CD4-positive, alpha-beta T cell (primary cell): ENCODE measurements at regions of chr3 and their contacts with region 1.

Region 1: DNA sequence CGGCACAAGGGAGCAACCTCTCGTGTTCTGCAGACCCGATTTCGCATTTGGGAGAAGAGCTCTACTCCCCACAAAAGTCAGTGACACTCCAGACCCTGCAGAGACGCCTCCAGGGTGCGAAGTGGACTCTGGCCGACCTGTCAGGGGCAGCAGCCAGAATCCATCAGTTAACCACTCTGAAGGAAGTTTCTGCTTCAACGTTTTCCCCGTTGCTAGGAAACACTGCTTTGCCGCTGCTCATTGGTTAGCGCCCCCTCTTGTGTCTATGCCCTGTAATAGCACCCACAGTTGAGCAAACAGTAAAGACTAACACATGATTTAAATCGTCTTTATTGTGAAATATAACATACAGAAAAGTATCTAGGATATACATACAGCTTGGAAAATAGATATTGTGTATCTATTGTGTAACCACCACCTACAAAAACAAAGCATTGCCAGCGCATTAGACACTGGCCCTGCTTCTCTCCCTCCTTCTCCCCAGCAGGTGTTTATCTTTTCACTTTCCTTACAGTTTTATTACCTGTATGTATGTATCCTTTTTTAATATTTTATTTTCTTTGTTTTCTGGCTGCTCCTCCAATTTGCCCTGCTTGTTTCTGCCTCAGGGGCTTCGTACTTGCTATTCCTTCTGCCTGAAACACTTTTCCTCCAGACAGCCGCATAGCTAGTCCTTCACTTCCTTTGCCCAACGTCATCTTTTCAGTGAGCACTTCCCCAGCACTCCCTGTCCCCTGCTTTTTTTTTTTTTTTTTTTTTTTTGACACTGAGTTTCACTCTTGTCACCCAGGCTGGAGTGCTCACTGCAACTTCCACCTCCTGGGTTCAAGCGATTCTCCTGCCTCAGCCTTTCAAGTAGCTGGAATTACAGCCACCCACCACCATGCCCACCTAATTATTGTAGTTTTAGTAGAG is 38.8 kb downstream of the TMEM40 start:
- DNase-seq: peak; percentile 52 to 90 (median 64)
- ATAC-seq: peak; percentile 97
- H3K4me3 ChIP-seq: peak overlapping the region; percentile 3
- H3K4me3 Mint-ChIP-seq: peak overlapping the region; percentile 48
- H3K27ac ChIP-seq: no peak overlapping the region
- H3K27ac Mint-ChIP-seq: no peak overlapping the region
- H3K4me1 ChIP-seq: peaks cover 5% of the 10 kb centered on the region
- H3K4me1 Mint-ChIP-seq: peaks cover 11% of the 10 kb centered on the region
- H3K27me3 ChIP-seq: no peaks in the 10 kb centered on the region
- H3K27me3 Mint-ChIP-seq: peaks cover 5% of the 10 kb centered on the region
- CTCF ChIP-seq: peak; percentile 96

Region 2: GRCh38 chr3:12135029-12135657 is 585.1 kb before region 1 on chr3:
- CTCF ChIA-PET with region 1: no interaction called
- POLR2A ChIA-PET with region 1: no interaction called
- intact Hi-C with region 1: loop called in 1 of 2 experiments (anchors 5 kb)
- DNase-seq: peak; percentile 25 to 75 (median 45)
- ATAC-seq: peak; percentile 86
- H3K4me3 ChIP-seq: no peak overlapping the region
- H3K4me3 Mint-ChIP-seq: no peak overlapping the region
- H3K27ac ChIP-seq: no peak overlapping the region
- H3K27ac Mint-ChIP-seq: no peak overlapping the region
- H3K4me1 ChIP-seq: no peaks in the 10 kb centered on the region
- H3K4me1 Mint-ChIP-seq: no peaks in the 10 kb centered on the region
- H3K27me3 ChIP-seq: peaks cover 0 to 5% of the 10 kb centered on the region in 2 experiments
- H3K27me3 Mint-ChIP-seq: peaks cover 20% of the 10 kb centered on the region
- CTCF ChIP-seq: peak; percentile 77

Region 3: DNA sequence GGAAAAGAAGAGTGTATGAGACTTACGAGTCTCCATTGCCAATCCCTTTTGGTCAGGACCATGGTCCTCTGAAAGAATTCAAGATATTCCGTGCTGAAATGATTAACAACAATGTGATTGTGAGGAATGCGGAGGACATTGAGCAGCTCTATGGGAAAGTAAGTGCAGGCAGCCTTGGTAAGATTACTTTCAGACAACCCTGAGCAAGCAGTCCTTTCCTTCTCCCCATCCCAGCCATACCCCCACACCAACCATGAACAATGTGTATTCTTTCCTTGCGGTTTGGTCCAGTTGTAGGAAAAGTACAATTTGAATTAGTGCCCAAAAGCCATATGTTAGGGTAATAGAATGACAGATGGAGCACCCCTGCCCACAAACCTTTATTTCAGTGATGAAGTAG is 230.4 kb before region 1 on chr3:
- CTCF ChIA-PET with region 1: no interaction called
- POLR2A ChIA-PET with region 1: no interaction called
- intact Hi-C with region 1: loop called in 1 of 2 experiments (anchors 5 kb)
- DNase-seq: no peak
- ATAC-seq: no peak
- H3K4me3 ChIP-seq: no peak overlapping the region
- H3K4me3 Mint-ChIP-seq: no peak overlapping the region
- H3K27ac ChIP-seq: no peak overlapping the region
- H3K27ac Mint-ChIP-seq: no peak overlapping the region
- H3K4me1 ChIP-seq: peaks cover 8% of the 10 kb centered on the region
- H3K4me1 Mint-ChIP-seq: peaks cover 29% of the 10 kb centered on the region
- H3K27me3 ChIP-seq: no peaks in the 10 kb centered on the region
- H3K27me3 Mint-ChIP-seq: no peaks in the 10 kb centered on the region
- CTCF ChIP-seq: no peak

Region 4: DNA sequence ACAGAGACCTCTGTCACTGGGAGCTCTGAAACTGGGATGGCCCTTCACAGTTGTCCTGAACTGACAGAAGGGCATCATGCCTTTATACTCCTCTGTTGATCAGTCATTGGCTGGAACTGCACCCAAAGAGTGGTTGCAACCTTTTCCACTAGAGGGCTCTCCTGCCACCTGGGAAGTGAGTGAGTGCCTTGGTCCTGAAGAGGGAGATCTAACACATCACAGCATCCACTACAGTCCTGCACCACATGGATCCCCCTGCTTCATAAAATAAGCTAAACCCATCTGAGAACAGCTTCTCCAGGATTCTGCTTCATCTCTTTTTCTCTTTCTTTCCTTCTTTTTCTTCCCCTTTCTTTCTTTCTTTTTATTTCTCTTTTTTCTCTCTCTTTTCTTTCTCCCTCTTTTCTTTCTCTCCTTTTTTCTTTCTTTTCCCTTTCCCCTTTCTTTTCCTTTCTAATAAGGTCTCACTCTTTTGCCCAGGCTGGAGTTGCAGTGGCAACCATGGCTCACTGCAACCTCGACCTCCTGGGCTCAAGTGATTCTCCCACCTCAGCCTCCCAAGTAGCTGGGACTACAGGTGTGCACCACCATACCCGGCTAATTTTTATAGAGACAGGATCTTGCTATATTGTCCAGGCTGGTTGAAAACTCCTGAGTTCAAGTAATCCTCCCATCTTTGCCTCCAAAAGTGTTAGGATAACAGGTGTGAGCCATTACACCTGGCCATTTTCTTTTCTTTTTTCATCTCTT is 13.6 kb before region 1 on chr3:
- CTCF ChIA-PET with region 1: interaction called, 4 read pairs
- POLR2A ChIA-PET with region 1: no interaction called
- intact Hi-C with region 1: loop called in 1 of 2 experiments (anchors 1 kb)
- DNase-seq: peak; percentile 12 to 81 (median 35)
- ATAC-seq: peak; percentile 99
- H3K4me3 ChIP-seq: no peak overlapping the region
- H3K4me3 Mint-ChIP-seq: no peak overlapping the region
- H3K27ac ChIP-seq: no peak overlapping the region
- H3K27ac Mint-ChIP-seq: no peak overlapping the region
- H3K4me1 ChIP-seq: no peaks in the 10 kb centered on the region
- H3K4me1 Mint-ChIP-seq: no peaks in the 10 kb centered on the region
- H3K27me3 ChIP-seq: no peaks in the 10 kb centered on the region
- H3K27me3 Mint-ChIP-seq: no peaks in the 10 kb centered on the region
- CTCF ChIP-seq: peak; percentile 77